ENCODE measurements at regions of chr12 and their contacts with region 1.

Region 1: DNA sequence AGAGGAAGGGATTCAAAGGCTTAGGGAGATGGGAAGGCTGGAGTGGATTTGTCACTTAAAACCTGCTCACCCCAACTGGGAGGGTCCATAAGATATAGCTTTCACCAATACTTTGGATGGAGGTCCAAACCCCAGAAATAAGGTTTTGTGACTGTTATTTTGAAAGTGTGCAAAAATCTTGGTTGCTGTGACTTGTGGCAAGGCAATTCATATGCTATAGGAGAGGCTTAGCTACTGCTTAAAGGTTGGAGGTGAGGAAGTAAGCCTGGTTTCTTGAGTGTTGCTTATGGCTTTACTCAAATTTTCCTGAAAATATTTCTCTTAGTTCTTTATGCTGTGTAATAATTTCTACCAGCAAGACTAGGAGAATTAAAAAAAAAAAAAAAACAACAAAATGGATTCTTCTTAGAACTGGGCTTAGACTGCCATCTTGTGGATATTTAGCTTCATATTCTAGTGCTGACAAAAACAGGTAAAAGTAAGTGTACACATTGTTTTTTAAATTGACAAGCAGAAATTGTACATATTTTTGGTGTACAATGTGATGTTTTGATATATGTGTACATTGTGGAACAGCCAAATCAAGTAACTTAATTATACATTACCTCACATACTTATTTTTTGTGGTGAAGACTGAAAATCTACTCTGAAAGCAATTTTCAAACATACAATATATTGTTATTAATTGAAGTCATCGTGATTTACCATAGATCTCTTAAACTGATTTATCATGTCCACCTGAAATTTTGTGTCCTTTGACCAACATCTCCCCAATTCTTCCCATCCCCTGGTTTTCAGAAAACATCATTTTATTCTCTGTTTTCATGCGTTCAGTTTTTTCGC is 23.0 kb downstream of the PDE6H start:
- DNase-seq: peak; percentile 79
- ATAC-seq: peak; percentile 45
- H3K4me3 ChIP-seq: no peak overlapping the region
- H3K4me3 Mint-ChIP-seq: no peak overlapping the region
- H3K27ac ChIP-seq: no peak overlapping the region
- H3K27ac Mint-ChIP-seq: peak overlapping the region; percentile 38
- H3K4me1 ChIP-seq: peaks cover 34 to 36% of the 10 kb centered on the region in 2 donors
- H3K4me1 Mint-ChIP-seq: peaks cover 39% of the 10 kb centered on the region
- H3K27me3 ChIP-seq: peaks cover 0 to 4% (median 1%) of the 10 kb centered on the region in 4 experiments
- H3K27me3 Mint-ChIP-seq: peaks cover 5% of the 10 kb centered on the region
- CTCF ChIP-seq: peak; percentile 83

Region 2: DNA sequence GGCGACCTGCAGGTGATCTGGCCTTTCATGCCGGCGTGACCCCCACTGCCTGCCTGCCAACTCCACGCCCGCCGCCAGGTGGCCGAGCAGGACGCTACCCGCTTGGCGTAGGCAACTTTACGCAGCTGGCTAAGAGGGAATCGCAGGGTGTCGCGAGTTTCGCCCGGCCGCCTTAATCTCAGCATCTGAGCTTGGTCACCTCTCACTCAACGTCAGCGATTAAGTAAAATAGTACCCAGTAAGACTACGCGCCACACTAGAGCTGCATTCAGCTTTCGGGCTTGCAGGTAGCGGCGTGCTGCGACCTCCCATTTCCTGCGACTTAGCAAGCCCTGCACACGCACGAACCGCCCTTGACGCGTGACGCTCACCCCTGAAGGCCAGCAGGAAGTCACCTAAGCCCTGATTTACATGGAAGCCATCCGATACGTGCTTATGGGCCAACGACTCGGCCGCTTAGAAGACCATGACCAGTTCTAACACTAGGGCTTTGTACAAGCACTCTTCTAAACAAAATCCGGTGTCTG is 225.8 kb before region 1 on chr12:
- CTCF ChIA-PET with region 1: interaction called, 9 read pairs
- POLR2A ChIA-PET with region 1: no interaction called
- intact Hi-C with region 1: loop called (anchors 2 kb)
- DNase-seq: peak; percentile 97
- ATAC-seq: peak; percentile 57
- H3K4me3 ChIP-seq: peak overlapping the region; percentile 78 to 98 (median 93)
- H3K4me3 Mint-ChIP-seq: peak overlapping the region; percentile 97
- H3K27ac ChIP-seq: peak overlapping the region; percentile 94 to 96
- H3K27ac Mint-ChIP-seq: peak overlapping the region; percentile 97
- H3K4me1 ChIP-seq: peaks cover 28 to 45% of the 10 kb centered on the region in 2 donors
- H3K4me1 Mint-ChIP-seq: peaks cover 55% of the 10 kb centered on the region
- H3K27me3 ChIP-seq: no peaks in the 10 kb centered on the region
- H3K27me3 Mint-ChIP-seq: no peaks in the 10 kb centered on the region
- CTCF ChIP-seq: peak; percentile 86

Region 3: GRCh38 chr12:14854586-14855183 is 141.1 kb before region 1 on chr12:
- CTCF ChIA-PET with region 1: interaction called, 28 read pairs
- POLR2A ChIA-PET with region 1: no interaction called
- intact Hi-C with region 1: no loop called
- DNase-seq: no peak
- ATAC-seq: peak; percentile 31
- H3K4me3 ChIP-seq: no peak overlapping the region
- H3K4me3 Mint-ChIP-seq: peak overlapping the region; percentile 30
- H3K27ac ChIP-seq: no peak overlapping the region
- H3K27ac Mint-ChIP-seq: no peak overlapping the region
- H3K4me1 ChIP-seq: peaks cover 12 to 24% of the 10 kb centered on the region in 2 donors
- H3K4me1 Mint-ChIP-seq: peaks cover 29% of the 10 kb centered on the region
- H3K27me3 ChIP-seq: no peaks in the 10 kb centered on the region
- H3K27me3 Mint-ChIP-seq: no peaks in the 10 kb centered on the region
- CTCF ChIP-seq: no peak

Region 4: DNA sequence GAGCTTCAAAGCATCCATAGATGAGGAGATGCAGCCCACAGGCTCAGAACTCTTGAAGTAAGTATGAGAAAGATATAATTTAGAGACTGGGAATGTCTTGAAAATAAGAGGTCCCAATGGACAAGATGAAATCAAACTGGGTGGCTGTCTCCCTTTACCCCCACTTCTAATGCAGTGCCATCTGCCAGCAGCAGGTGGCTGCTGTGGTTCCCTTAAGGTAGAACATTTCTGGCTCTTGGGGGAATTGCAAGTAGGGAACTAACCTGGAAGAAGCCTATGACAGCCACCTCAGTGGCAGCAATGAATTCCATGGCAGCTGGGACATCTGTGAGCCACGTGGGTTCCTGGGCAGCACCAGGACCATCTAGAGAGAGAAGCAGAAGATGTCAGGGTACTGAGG is 58.1 kb before region 1 on chr12:
- CTCF ChIA-PET with region 1: interaction called, 60 read pairs
- POLR2A ChIA-PET with region 1: interaction called, 9 read pairs
- intact Hi-C with region 1: loop called (anchors 2 kb)
- DNase-seq: no peak
- ATAC-seq: peak; percentile 39
- H3K4me3 ChIP-seq: no peak overlapping the region
- H3K4me3 Mint-ChIP-seq: no peak overlapping the region
- H3K27ac ChIP-seq: peak overlapping the region in 1 of 2 donors; percentile 14
- H3K27ac Mint-ChIP-seq: peak overlapping the region; percentile 63
- H3K4me1 ChIP-seq: peaks cover 11 to 19% of the 10 kb centered on the region in 2 donors
- H3K4me1 Mint-ChIP-seq: peaks cover 28% of the 10 kb centered on the region
- H3K27me3 ChIP-seq: no peaks in the 10 kb centered on the region
- H3K27me3 Mint-ChIP-seq: no peaks in the 10 kb centered on the region
- CTCF ChIP-seq: peak; percentile 29

Region 5: GRCh38 chr12:15013634-15014179 is 17.9 kb after region 1 on chr12:
- CTCF ChIA-PET with region 1: no interaction called
- POLR2A ChIA-PET with region 1: no interaction called
- intact Hi-C with region 1: no loop called
- DNase-seq: no peak
- ATAC-seq: no peak
- H3K4me3 ChIP-seq: no peak overlapping the region
- H3K4me3 Mint-ChIP-seq: no peak overlapping the region
- H3K27ac ChIP-seq: no peak overlapping the region
- H3K27ac Mint-ChIP-seq: no peak overlapping the region
- H3K4me1 ChIP-seq: peaks cover 0 to 3% of the 10 kb centered on the region in 2 donors
- H3K4me1 Mint-ChIP-seq: no peaks in the 10 kb centered on the region
- H3K27me3 ChIP-seq: peaks cover 0 to 6% (median 0%) of the 10 kb centered on the region in 4 experiments
- H3K27me3 Mint-ChIP-seq: peaks cover 14% of the 10 kb centered on the region
- CTCF ChIP-seq: no peak

Region 6: DNA sequence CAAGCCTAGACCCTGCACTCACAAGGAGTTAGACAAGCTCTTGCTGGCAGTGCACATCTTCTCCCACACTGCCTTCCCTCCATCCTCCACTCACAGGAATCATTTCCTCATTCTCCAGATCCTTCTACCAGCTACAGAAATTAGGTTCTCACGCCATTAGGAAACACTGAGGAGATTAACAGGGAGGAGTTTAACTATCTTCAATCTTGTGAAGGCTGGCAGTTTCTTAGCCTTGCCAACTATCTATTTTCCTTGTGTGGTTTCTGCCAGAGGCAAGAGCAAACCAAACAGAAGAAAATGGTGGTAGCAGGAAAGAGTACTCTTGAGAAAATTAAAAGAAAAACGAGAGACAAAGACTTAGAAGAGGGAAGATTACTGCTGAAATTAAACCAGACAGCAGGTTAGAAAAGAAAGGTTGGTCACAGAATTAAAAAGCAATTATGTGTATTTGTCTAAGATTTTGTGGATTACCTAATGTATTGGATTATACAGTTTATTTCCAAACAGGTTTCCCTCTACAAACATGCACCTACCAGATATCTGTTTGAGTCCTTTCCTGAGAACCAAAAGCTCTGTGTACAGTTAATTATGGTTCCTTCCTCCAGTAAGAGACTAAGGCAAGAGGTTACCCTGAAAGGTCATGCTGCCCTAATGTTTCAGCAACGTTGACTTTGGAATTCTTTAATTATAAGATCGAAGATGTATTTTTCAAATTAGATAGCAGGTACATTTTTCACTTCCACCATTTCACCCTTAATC is 220.4 kb after region 1 on chr12:
- CTCF ChIA-PET with region 1: interaction called, 15 read pairs
- POLR2A ChIA-PET with region 1: no interaction called
- intact Hi-C with region 1: loop called (anchors 5 kb)
- DNase-seq: no peak
- ATAC-seq: no peak
- H3K4me3 ChIP-seq: no peak overlapping the region
- H3K4me3 Mint-ChIP-seq: no peak overlapping the region
- H3K27ac ChIP-seq: no peak overlapping the region
- H3K27ac Mint-ChIP-seq: no peak overlapping the region
- H3K4me1 ChIP-seq: peaks cover 4 to 5% of the 10 kb centered on the region in 2 donors
- H3K4me1 Mint-ChIP-seq: peaks cover 7% of the 10 kb centered on the region
- H3K27me3 ChIP-seq: peaks cover 0 to 12% (median 7%) of the 10 kb centered on the region in 4 experiments
- H3K27me3 Mint-ChIP-seq: peaks cover 17% of the 10 kb centered on the region
- CTCF ChIP-seq: no peak

Region 7: GRCh38 chr12:15590180-15590826 is 594.5 kb after region 1 on chr12:
- CTCF ChIA-PET with region 1: no interaction called
- POLR2A ChIA-PET with region 1: no interaction called
- intact Hi-C with region 1: no loop called
- DNase-seq: peak; percentile 79
- ATAC-seq: peak; percentile 91
- H3K4me3 ChIP-seq: peak overlapping the region in 1 of 5 experiments; percentile 20
- H3K4me3 Mint-ChIP-seq: peak overlapping the region; percentile 81
- H3K27ac ChIP-seq: no peak overlapping the region
- H3K27ac Mint-ChIP-seq: peak overlapping the region; percentile 64
- H3K4me1 ChIP-seq: peaks cover 6 to 8% of the 10 kb centered on the region in 2 donors
- H3K4me1 Mint-ChIP-seq: peaks cover 9% of the 10 kb centered on the region
- H3K27me3 ChIP-seq: no peaks in the 10 kb centered on the region
- H3K27me3 Mint-ChIP-seq: no peaks in the 10 kb centered on the region
- CTCF ChIP-seq: peak; percentile 91